IMR-90 (cell line): ENCODE measurements at regions of chr10 and their contacts with region 1.

Region 1: GRCh38 chr10:27155066-27155754 is at the start of gene MASTL:
- DNase-seq: peak; percentile 95
- ATAC-seq: peak; percentile 89
- H3K4me3 ChIP-seq: peak within 1 kb of the TSS; percentile 87
- H3K27ac ChIP-seq: peak within 1 kb of the TSS; percentile 90
- H3K4me1 ChIP-seq: 0 out of 2 replicates have a peak, but pooled peaks cover 1% of the 10 kb centered on the region
- H3K27me3 ChIP-seq: no peaks in the 10 kb centered on the region
- CTCF ChIP-seq: no peak
- POLR2A ChIP-seq: peak; percentile 96
- RAD21 ChIP-seq: no peak
- total RNA-seq, gene MASTL: 13.4 and 18.1 TPM in 2 replicates

Region 2: DNA sequence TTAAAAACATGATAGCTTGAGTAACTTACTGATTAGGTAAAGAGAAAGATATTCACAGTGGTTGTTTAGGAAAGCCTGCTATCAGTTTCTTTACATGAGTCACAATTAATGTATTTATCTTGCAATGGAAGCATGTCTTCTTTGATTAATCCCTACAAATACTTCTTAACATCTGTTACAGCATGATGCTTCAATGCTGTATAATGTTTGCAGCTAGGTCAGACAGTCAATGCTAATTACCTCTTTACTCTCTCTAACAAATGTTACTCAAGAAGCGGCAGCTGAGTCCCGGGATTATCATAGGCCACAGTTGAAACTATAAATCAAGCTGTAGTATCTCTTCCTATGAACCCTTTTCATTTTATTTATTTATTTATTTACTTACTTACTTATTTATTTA is 52.1 kb after region 1 on chr10:
- CTCF ChIA-PET with region 1: no interaction called
- POLR2A ChIA-PET with region 1: no interaction called
- dilution Hi-C with region 1: no loop called
- in situ Hi-C with region 1: no loop called
- intact Hi-C with region 1: loop called (anchors 5 kb)
- DNase-seq: peak; percentile 72
- ATAC-seq: peak; percentile 72
- H3K4me3 ChIP-seq: no peak overlapping the region
- H3K27ac ChIP-seq: no peak overlapping the region
- H3K4me1 ChIP-seq: 0 out of 2 replicates have a peak, but pooled peaks cover 2% of the 10 kb centered on the region
- H3K27me3 ChIP-seq: no peaks in the 10 kb centered on the region
- CTCF ChIP-seq: no peak
- POLR2A ChIP-seq: no peak
- RAD21 ChIP-seq: no peak